Sciatic nerve (tissue), 2 donors: ENCODE measurements at regions of chr12 and their contacts with region 1.

Region 1: GRCh38 chr12:3791256-3792252 is 38.6 kb upstream of the CRACR2A start:
- DNase-seq: no peak
- ATAC-seq: no peak

Region 2: GRCh38 chr12:3571724-3572123 is 219.8 kb before region 1 on chr12:
- intact Hi-C with region 1: no loop called
- DNase-seq: no peak
- ATAC-seq: no peak

Region 3: DNA sequence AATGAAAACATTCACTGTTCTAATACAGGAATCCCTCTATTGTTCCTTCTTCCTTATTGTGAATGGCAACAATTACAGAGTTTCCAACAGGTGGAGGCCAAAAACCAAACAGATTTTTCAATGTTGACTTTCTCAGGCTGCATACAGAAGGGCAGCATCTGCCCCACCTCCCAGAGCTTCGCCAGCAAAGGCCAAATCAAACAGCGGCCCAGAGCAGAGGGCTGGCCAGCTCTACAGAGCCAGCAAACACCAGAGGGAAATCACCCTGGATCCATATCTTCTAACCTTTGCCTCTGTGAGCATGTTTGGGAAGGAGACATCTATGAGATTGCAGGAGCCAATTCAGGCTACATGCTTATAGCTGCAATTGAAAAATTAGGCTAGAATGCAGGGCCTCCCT is 34.3 kb before region 1 on chr12:
- intact Hi-C with region 1: loop called (anchors 2 kb)
- DNase-seq: no peak
- ATAC-seq: no peak

Region 4: DNA sequence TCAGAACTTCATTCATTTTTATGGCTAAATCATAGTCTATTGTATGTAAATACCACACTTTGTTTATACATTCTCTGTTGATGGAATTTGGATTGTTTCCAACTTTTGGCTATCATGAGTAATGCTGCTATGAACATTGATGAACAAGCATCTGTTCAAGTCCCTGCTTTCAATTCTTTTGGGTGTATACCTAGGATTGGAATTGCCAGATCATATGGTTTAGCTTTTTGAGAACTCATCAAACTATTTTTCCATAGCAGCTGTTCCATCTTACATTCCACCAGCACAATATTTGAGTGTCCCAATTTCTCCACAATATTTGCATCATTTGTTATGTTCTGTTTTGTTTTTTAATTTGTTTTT is 429.7 kb after region 1 on chr12:
- intact Hi-C with region 1: no loop called
- DNase-seq: no peak
- ATAC-seq: no peak